ENCODE measurements at regions of chr3 and their contacts with region 1.

Region 1: DNA sequence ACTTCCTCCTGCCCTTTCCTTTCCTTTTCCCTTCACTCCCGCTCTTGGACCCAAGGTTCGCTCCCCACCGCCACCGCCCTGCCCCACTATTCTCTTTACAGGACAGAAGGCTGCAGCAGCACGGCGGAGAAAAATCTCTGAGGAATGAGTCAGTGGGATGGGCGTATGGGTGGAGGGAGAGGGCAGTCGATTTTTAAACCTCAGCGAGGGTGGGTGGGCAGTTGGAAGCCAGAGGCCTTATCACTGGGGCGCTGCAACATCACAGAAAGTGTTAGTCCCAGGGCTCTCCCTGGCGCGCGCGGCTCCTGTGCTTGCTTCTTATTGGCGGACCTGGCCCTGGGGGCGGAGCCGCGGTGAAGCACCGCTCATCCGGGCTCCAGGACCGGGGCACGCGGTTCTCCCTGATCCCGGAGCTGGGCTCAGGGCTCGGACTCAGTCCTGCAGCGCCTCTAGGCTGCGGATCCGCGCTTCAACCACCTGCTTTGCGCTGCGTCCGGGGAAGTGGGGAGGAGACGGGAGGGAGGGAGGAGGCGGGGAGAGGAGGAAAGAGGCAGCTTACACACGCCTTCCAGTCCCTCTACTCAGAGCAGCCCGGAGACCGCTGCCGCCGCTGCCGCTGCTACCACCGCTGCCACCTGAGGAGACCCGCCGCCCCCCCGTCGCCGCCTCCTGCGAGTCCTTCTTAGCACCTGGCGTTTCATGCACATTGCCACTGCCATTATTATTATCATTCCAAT is at the start of gene ALCAM:
- DNase-seq: peak; percentile 97
- H3K4me3 Mint-ChIP-seq: peak within 1 kb of the TSS; percentile 92
- H3K27ac Mint-ChIP-seq: peak within 1 kb of the TSS; percentile 99
- H3K4me1 Mint-ChIP-seq: peaks cover 4% of the 10 kb centered on the region
- H3K27me3 Mint-ChIP-seq: no peaks in the 10 kb centered on the region
- CTCF ChIP-seq: no peak
- total RNA-seq, gene ALCAM: 146 and 166 TPM in 2 replicates

Region 2: GRCh38 chr3:104596551-104596950 is 769.9 kb before region 1 on chr3:
- CTCF ChIA-PET with region 1: interaction called, 7 read pairs
- intact Hi-C with region 1: loop called (anchors 2 kb)
- DNase-seq: peak; percentile 32
- H3K4me3 Mint-ChIP-seq: no peak overlapping the region
- H3K27ac Mint-ChIP-seq: no peak overlapping the region
- H3K4me1 Mint-ChIP-seq: no peaks in the 10 kb centered on the region
- H3K27me3 Mint-ChIP-seq: no peaks in the 10 kb centered on the region
- CTCF ChIP-seq: peak; percentile 25

Region 3: DNA sequence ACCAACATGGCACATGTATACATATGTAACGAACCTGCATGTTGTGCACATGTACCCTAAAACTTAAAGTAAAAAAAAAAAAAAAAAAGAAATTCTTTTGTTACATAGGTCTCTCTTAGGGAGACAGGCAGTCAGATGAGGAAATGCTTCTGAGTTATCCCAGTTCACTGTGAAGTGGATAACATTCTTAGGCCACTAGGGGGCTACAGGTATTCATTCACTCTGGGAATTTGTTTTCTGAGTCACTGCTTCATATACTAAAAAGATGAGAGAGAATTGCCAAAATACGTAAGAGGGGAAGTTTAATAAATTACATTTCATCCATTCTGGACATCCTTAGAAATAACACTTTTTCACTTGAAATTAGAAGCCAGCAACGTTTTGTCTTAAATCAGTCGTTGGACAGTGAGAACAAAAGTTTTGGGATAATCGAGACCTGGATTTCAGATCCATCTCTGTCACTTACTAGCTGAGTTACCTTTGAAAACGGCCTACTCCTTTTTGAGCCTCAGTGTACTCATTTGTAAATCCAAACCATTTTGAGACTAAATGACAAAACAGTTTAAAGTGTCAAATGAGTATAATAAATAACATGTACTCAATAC is 738.2 kb before region 1 on chr3:
- CTCF ChIA-PET with region 1: no interaction called
- intact Hi-C with region 1: loop called (anchors 1 kb)
- DNase-seq: peak; percentile 10
- H3K4me3 Mint-ChIP-seq: no peak overlapping the region
- H3K27ac Mint-ChIP-seq: no peak overlapping the region
- H3K4me1 Mint-ChIP-seq: no peaks in the 10 kb centered on the region
- H3K27me3 Mint-ChIP-seq: no peaks in the 10 kb centered on the region
- CTCF ChIP-seq: no peak

Region 4: DNA sequence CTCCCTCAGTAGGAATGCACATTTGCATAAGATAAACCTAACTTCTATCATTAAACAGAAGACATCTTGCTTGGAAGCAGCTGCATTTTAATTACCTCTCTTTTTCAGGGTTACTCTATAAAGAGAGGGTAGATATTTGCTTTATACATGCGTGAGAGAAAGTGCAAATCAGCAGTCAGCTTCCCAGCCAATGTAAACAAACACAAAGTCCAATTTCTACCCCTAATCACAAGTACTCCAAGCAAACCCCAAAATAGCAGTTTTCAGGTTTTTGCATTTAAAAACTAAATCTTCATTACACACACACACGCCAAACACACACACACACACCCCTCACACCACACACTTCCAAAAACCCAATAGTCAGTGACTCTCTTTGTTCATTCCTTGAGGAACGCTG is 303.6 kb before region 1 on chr3:
- CTCF ChIA-PET with region 1: no interaction called
- intact Hi-C with region 1: loop called (anchors 5 kb)
- DNase-seq: no peak
- H3K4me3 Mint-ChIP-seq: peak overlapping the region; percentile 39
- H3K27ac Mint-ChIP-seq: peak overlapping the region; percentile 0
- H3K4me1 Mint-ChIP-seq: peaks cover 15% of the 10 kb centered on the region
- H3K27me3 Mint-ChIP-seq: no peaks in the 10 kb centered on the region
- CTCF ChIP-seq: no peak

Region 5: GRCh38 chr3:105402287-105402801 is 35.9 kb after region 1 on chr3:
- CTCF ChIA-PET with region 1: no interaction called
- intact Hi-C with region 1: loop called (anchors 2 kb)
- DNase-seq: peak; percentile 87
- H3K4me3 Mint-ChIP-seq: peak overlapping the region; percentile 52
- H3K27ac Mint-ChIP-seq: peak overlapping the region; percentile 93
- H3K4me1 Mint-ChIP-seq: peaks cover 53% of the 10 kb centered on the region
- H3K27me3 Mint-ChIP-seq: no peaks in the 10 kb centered on the region
- CTCF ChIP-seq: no peak

Region 6: DNA sequence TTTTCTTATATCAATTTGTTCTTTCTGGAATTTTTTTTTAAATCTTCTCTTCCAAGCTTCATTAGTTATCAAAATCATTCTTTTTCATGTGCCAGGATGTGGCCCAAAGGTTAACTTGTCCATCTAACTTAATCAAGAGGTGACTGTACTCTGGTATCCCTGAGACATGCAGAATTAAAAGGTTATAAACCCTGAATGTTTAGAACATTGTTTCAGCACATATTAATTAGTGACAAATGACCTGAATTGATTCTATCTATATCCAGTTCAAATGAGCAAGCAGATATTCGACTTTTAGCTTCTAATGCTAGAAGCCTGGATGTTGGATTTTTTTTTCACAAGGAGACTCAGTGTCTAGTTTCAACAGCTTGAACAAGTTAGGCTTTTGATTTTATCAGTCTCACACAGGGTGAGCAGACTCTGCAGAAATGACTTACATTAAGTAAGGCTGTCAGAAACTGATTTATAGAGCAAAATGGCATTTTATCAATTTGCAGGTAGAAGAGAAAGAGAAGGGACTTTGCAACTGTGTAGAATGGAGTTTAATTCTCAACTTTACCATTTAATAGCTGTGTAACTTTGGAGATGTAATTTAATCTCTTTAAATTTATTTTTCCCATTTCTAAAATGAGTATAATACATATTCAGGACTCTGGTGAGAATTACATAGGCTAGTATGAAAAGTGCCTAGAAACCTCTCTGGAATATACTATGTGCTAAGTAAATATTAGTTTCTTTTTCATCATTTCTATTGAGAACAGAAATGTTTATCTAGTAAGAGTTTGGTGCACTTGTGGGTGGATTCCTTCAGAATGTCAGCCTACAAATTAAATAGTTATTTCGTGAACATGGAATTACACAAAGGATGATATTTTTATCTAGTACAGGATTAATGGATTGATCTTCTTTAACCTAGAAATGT is 100.2 kb after region 1 on chr3:
- CTCF ChIA-PET with region 1: no interaction called
- intact Hi-C with region 1: no loop called
- DNase-seq: no peak
- H3K4me3 Mint-ChIP-seq: no peak overlapping the region
- H3K27ac Mint-ChIP-seq: no peak overlapping the region
- H3K4me1 Mint-ChIP-seq: peaks cover 22% of the 10 kb centered on the region
- H3K27me3 Mint-ChIP-seq: no peaks in the 10 kb centered on the region
- CTCF ChIP-seq: no peak